ENCODE measurements at regions of chr3 and their contacts with region 1.

Region 1: GRCh38 chr3:38590521-38590920 is 59.0 kb downstream of the SCN5A start:
- DNase-seq: no peak
- H3K4me3 ChIP-seq: no peak overlapping the region
- H3K27ac ChIP-seq: no peak overlapping the region
- H3K4me1 ChIP-seq: no peaks in the 10 kb centered on the region
- H3K27me3 ChIP-seq: peaks cover 2% of the 10 kb centered on the region
- CTCF ChIP-seq: no peak

Region 2: GRCh38 chr3:38117748-38118420 is 472.6 kb before region 1 on chr3:
- CTCF ChIA-PET with region 1: no interaction called
- dilution Hi-C with region 1: no loop called
- in situ Hi-C with region 1: no loop called
- intact Hi-C with region 1: no loop called
- DNase-seq: peak; percentile 43
- H3K4me3 ChIP-seq: no peak overlapping the region
- H3K27ac ChIP-seq: no peak overlapping the region
- H3K4me1 ChIP-seq: no peaks in the 10 kb centered on the region
- H3K27me3 ChIP-seq: no peaks in the 10 kb centered on the region
- CTCF ChIP-seq: peak; percentile 83 to 92

Region 3: GRCh38 chr3:38651154-38651789 is 60.8 kb after region 1 on chr3:
- CTCF ChIA-PET with region 1: no interaction called
- dilution Hi-C with region 1: loop called (anchors 10 kb)
- in situ Hi-C with region 1: no loop called
- intact Hi-C with region 1: no loop called
- DNase-seq: peak; percentile 45
- H3K4me3 ChIP-seq: no peak overlapping the region
- H3K27ac ChIP-seq: no peak overlapping the region
- H3K4me1 ChIP-seq: peaks cover 6% of the 10 kb centered on the region
- H3K27me3 ChIP-seq: peaks cover 9% of the 10 kb centered on the region
- CTCF ChIP-seq: peak; percentile 98 to 99

Region 4: GRCh38 chr3:38805765-38806386 is 215.4 kb after region 1 on chr3:
- CTCF ChIA-PET with region 1: no interaction called
- dilution Hi-C with region 1: no loop called
- in situ Hi-C with region 1: no loop called
- intact Hi-C with region 1: no loop called
- DNase-seq: peak; percentile 67
- H3K4me3 ChIP-seq: no peak overlapping the region
- H3K27ac ChIP-seq: no peak overlapping the region
- H3K4me1 ChIP-seq: no peaks in the 10 kb centered on the region
- H3K27me3 ChIP-seq: peaks cover 3% of the 10 kb centered on the region
- CTCF ChIP-seq: no peak

Measured in mammary epithelial cell (primary cell).